Activated B cell treated with CpG ODN at 0.5 μM for 24 hours (primary cell): ENCODE measurements at regions of chr5 and their contacts with region 1.

Region 1: GRCh38 chr5:126600631-126601511 is at the start of gene PHAX:
- DNase-seq: peak; percentile 76
- ATAC-seq: peak; percentile 94
- H3K4me3 Mint-ChIP-seq: peak within 1 kb of the TSS; percentile 99
- H3K27ac Mint-ChIP-seq: peak within 1 kb of the TSS; percentile 95
- H3K4me1 Mint-ChIP-seq: peaks cover 36% of the 10 kb centered on the region
- H3K27me3 Mint-ChIP-seq: no peaks in the 10 kb centered on the region
- CTCF ChIP-seq: no peak
- total RNA-seq, gene PHAX: 31.0 and 33.3 TPM in 2 replicates

Region 2: DNA sequence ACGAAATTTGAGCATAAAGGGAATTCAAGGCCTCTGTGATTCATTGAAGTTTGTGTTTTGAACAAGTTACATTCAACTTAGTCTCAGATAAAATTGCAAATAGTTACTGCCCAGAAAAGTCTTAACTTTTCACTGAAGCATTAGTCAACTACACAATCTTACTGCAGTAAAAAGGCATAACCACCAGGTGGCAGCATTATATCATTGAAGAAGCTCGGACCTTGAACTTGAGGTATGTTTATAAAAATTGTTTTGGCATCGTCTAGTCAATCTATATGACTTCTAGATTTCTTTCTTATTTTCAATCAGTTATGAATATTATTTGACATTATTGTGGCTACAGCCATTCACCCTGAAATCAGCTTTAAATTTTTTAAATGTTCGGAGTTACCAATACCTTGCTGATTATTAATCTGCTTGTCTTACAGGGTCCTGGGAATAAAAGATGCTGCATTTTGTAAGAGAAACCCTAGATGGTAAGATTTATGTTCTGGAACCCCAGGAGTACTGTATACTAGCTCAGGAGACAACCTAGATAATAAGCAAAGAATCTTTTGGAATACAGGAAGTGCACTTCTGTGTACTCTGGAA is 261.6 kb before region 1 on chr5:
- CTCF ChIA-PET with region 1: interaction called, 10 read pairs
- POLR2A ChIA-PET with region 1: no interaction called
- intact Hi-C with region 1: loop called (anchors 1 kb)
- DNase-seq: no peak
- ATAC-seq: no peak
- H3K4me3 Mint-ChIP-seq: no peak overlapping the region
- H3K27ac Mint-ChIP-seq: no peak overlapping the region
- H3K4me1 Mint-ChIP-seq: no peaks in the 10 kb centered on the region
- H3K27me3 Mint-ChIP-seq: peaks cover 21% of the 10 kb centered on the region
- CTCF ChIP-seq: peak; percentile 40

Region 3: DNA sequence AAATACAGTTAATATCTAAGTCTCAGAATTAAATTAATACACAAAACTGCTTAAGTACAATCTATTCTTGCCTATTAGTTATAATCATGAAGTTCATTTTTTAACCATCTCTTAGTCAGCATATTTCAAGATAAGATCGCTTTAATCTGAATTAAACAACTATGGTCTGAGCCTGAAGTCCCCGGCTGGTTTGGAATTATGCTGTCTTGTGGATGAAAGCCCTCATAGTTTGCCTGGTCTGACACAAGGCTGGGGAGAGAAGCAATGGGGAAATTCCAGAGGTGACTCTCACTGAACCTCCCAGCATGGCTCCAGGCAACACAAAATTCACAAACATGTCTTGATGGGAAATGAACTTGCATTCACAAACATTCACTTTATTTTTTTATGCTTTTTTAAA is 205.7 kb before region 1 on chr5:
- CTCF ChIA-PET with region 1: no interaction called
- POLR2A ChIA-PET with region 1: no interaction called
- intact Hi-C with region 1: no loop called
- DNase-seq: no peak
- ATAC-seq: no peak
- H3K4me3 Mint-ChIP-seq: no peak overlapping the region
- H3K27ac Mint-ChIP-seq: no peak overlapping the region
- H3K4me1 Mint-ChIP-seq: peaks cover 2% of the 10 kb centered on the region
- H3K27me3 Mint-ChIP-seq: peaks cover 12% of the 10 kb centered on the region
- CTCF ChIP-seq: no peak

Region 4: DNA sequence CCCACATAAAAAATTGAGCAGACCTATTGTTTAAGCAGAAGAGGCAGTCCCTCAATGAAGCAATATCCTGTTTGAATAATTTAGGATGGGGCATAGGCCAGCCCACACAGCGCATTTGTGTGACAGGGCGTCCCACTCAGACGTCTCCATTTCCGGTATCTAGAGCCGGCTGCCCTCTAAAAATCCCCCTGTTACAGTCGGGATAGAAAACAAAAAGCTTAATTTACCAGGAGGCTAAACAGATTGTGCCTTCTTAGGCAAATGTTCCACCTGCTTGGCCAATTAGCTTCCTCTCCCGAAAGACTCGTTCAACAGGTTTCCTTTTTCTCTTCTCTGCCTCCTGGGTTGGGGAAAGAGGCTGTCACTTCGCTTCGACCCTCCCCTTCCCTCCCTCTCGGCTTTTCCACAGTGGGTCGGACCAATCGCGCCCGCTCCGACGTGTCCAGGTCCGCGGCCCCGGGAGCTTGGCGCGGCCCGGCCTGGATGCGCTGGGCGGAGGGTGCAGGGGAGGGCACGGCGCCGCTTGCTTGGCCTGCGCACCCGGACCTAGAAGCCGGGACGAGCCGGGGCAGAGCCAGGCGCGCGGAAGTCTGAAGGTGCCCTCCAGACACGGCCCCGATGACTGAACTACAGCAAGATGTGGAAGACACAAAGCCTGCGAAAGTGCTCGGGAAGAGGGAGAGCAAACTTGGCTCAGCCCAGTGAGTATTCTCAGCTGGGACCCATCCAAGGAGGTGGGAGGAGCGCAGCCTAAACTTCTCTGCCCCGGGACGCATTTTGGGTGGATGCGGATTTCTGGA is 177.7 kb before region 1 on chr5 and contains the start of gene GRAMD2B:
- CTCF ChIA-PET with region 1: no interaction called
- POLR2A ChIA-PET with region 1: no interaction called
- intact Hi-C with region 1: loop called (anchors 1 kb)
- DNase-seq: peak; percentile 53
- ATAC-seq: peak; percentile 86
- H3K4me3 Mint-ChIP-seq: peak within 1 kb of the TSS; percentile 88
- H3K27ac Mint-ChIP-seq: peak within 1 kb of the TSS; percentile 76
- H3K4me1 Mint-ChIP-seq: peaks cover 26% of the 10 kb centered on the region
- H3K27me3 Mint-ChIP-seq: no peaks in the 10 kb centered on the region
- CTCF ChIP-seq: no peak
- total RNA-seq, gene GRAMD2B: 4.9 and 5.9 TPM in 2 replicates

Region 5: DNA sequence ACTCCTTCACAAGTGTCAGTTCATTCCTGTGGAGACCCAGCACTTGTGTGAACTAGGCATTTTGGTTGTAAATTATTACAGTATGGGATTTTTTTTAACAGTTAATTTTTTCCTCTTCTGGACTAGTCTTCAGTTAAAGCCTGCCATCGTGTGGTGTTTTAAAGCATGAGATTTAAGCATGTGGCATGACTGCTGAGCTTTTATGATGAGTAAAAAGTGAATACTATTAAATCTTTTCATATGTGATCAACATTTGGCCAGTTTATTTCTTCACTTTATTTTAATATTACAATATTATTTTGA is 201.1 kb after region 1 on chr5:
- CTCF ChIA-PET with region 1: no interaction called
- POLR2A ChIA-PET with region 1: no interaction called
- intact Hi-C with region 1: loop called (anchors 5 kb)
- DNase-seq: no peak
- ATAC-seq: peak; percentile 28
- H3K4me3 Mint-ChIP-seq: no peak overlapping the region
- H3K27ac Mint-ChIP-seq: no peak overlapping the region
- H3K4me1 Mint-ChIP-seq: peaks cover 37% of the 10 kb centered on the region
- H3K27me3 Mint-ChIP-seq: no peaks in the 10 kb centered on the region
- CTCF ChIP-seq: no peak

Region 6: DNA sequence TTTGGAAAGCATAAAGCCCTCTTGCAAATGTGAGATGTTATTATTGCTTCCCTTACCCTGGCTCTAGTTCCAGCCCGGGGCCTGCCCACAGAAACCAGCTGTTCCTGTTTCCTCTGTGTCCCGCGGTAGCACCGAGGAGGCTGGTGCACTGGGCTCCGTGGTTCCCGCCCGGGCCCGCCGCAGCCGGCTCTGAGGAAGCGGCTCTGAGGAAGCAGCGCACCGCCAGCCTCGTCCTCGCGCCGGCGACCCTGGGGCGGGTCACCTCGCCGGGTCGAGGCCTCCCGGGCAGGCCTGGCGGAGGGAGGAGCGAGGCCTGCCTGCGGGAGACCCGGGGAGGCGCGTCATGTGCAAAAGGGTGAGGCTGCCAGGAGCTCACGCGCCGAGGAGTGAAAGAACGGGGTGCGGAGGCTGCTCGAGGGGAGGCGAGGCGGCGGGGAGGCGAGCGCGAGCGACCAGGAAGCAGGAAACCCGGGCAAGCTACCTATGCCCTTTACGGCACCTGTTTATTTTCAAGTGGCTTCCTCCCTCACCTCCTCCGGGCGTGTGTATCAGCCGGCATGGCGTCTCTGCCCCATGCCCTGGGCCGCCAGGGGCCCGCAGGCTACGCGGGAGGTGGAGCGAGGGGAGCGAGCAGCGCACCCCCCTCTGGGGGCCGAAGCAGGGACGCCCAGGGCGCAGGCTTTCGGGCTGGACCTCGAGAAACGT is 628.5 kb after region 1 on chr5:
- CTCF ChIA-PET with region 1: no interaction called
- POLR2A ChIA-PET with region 1: interaction called, 5 read pairs
- intact Hi-C with region 1: loop called (anchors 2 kb)
- DNase-seq: peak; percentile 62
- ATAC-seq: peak; percentile 86
- H3K4me3 Mint-ChIP-seq: peak overlapping the region; percentile 85
- H3K27ac Mint-ChIP-seq: no peak overlapping the region
- H3K4me1 Mint-ChIP-seq: peaks cover 18% of the 10 kb centered on the region
- H3K27me3 Mint-ChIP-seq: no peaks in the 10 kb centered on the region
- CTCF ChIP-seq: no peak

Region 7: GRCh38 chr5:128083033-128083810 is 1482.4 kb after region 1 on chr5 and contains the start of gene SLC12A2:
- CTCF ChIA-PET with region 1: no interaction called
- POLR2A ChIA-PET with region 1: no interaction called
- intact Hi-C with region 1: loop called (anchors 2 kb)
- DNase-seq: peak; percentile 92
- ATAC-seq: peak; percentile 75
- H3K4me3 Mint-ChIP-seq: peak within 1 kb of the TSS; percentile 95
- H3K27ac Mint-ChIP-seq: peak within 1 kb of the TSS; percentile 97
- H3K4me1 Mint-ChIP-seq: peaks cover 72% of the 10 kb centered on the region
- H3K27me3 Mint-ChIP-seq: no peaks in the 10 kb centered on the region
- CTCF ChIP-seq: no peak
- total RNA-seq, gene SLC12A2: 19.9 and 20.6 TPM in 2 replicates